ENCODE measurements at regions of chr17 and their contacts with region 1.

Region 1: GRCh38 chr17:75515496-75516254 is at the start of gene CASKIN2:
- DNase-seq: peak; percentile 98
- ATAC-seq: peak; percentile 71
- H3K4me3 ChIP-seq: peak within 1 kb of the TSS; percentile 78
- H3K27ac ChIP-seq: peak within 1 kb of the TSS; percentile 8
- H3K4me1 ChIP-seq: peaks cover 47% of the 10 kb centered on the region
- H3K27me3 ChIP-seq: no peaks in the 10 kb centered on the region
- CTCF ChIP-seq: peak; percentile 100
- total RNA-seq, gene CASKIN2: 22.0 and 28.3 TPM in 2 replicates

Region 2: DNA sequence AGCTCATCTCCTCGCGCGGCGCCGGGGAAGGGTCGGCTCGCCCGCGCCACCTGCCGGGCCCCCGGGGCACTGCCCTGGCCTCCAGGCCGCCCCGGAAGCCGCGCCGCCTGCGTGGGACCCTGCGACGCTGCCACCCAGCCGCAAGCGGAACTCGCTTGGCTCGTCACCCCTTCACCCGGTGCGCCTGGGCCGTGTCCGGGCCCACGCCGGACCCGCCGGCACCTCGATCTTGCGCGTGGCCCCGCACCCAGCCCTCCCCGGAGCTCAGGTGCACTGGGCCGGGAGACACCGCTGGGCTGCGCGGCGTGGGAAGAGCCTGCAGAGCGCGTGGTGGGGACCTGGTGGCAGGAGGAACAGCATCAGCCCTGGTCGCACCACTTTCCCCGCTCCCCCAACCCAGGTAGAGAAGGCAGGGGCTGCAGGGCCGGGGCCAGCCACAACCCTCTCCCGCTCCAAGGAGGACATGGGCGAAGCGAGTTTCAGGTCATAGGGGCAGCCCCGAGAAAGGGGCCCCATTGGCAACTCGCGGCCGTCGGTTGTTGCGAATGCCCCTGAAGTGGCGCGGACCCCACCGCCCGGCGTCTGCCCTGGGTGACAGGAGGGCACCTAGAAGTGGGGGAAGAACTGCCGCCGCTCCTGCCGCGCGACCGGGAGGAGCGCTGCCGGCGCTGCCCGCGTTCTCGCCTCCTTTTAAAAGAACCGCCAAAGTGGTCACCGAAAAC is 244.3 kb before region 1 on chr17:
- CTCF ChIA-PET with region 1: interaction called, 14 read pairs
- POLR2A ChIA-PET with region 1: no interaction called
- intact Hi-C with region 1: no loop called
- DNase-seq: peak; percentile 90
- ATAC-seq: peak; percentile 53
- H3K4me3 ChIP-seq: peak overlapping the region; percentile 73
- H3K27ac ChIP-seq: peak overlapping the region; percentile 36
- H3K4me1 ChIP-seq: peaks cover 20% of the 10 kb centered on the region
- H3K27me3 ChIP-seq: no peaks in the 10 kb centered on the region
- CTCF ChIP-seq: peak; percentile 57

Region 3: GRCh38 chr17:75404181-75404730 is 111.4 kb before region 1 on chr17:
- CTCF ChIA-PET with region 1: no interaction called
- POLR2A ChIA-PET with region 1: no interaction called
- intact Hi-C with region 1: no loop called
- DNase-seq: peak; percentile 90
- ATAC-seq: peak; percentile 45
- H3K4me3 ChIP-seq: peak overlapping the region; percentile 96
- H3K27ac ChIP-seq: peak overlapping the region; percentile 12
- H3K4me1 ChIP-seq: peaks cover 14% of the 10 kb centered on the region
- H3K27me3 ChIP-seq: no peaks in the 10 kb centered on the region
- CTCF ChIP-seq: peak; percentile 93

Region 4: GRCh38 chr17:75430159-75430974 is 85.3 kb before region 1 on chr17:
- CTCF ChIA-PET with region 1: interaction called, 8 read pairs
- POLR2A ChIA-PET with region 1: interaction called, 14 read pairs
- intact Hi-C with region 1: loop called (anchors 1 kb)
- DNase-seq: peak; percentile 19
- ATAC-seq: no peak
- H3K4me3 ChIP-seq: no peak overlapping the region
- H3K27ac ChIP-seq: no peak overlapping the region
- H3K4me1 ChIP-seq: peaks cover 21% of the 10 kb centered on the region
- H3K27me3 ChIP-seq: no peaks in the 10 kb centered on the region
- CTCF ChIP-seq: no peak

Region 5: GRCh38 chr17:75456417-75457046 is 59.1 kb before region 1 on chr17 and contains the start of gene TMEM94:
- CTCF ChIA-PET with region 1: interaction called, 3 read pairs
- POLR2A ChIA-PET with region 1: no interaction called
- intact Hi-C with region 1: loop called (anchors 5 kb)
- DNase-seq: peak; percentile 99
- ATAC-seq: peak; percentile 89
- H3K4me3 ChIP-seq: peak within 1 kb of the TSS; percentile 85
- H3K27ac ChIP-seq: peak within 1 kb of the TSS; percentile 13
- H3K4me1 ChIP-seq: peaks cover 38% of the 10 kb centered on the region
- H3K27me3 ChIP-seq: no peaks in the 10 kb centered on the region
- CTCF ChIP-seq: no peak
- total RNA-seq, gene TMEM94: 45.6 and 88.3 TPM in 2 replicates

Region 6: GRCh38 chr17:75549221-75550138 is 33.8 kb after region 1 on chr17:
- CTCF ChIA-PET with region 1: interaction called, 18 read pairs
- POLR2A ChIA-PET with region 1: no interaction called
- intact Hi-C with region 1: no loop called
- DNase-seq: peak; percentile 96
- ATAC-seq: peak; percentile 94
- H3K4me3 ChIP-seq: peak overlapping the region; percentile 57
- H3K27ac ChIP-seq: peak overlapping the region; percentile 98
- H3K4me1 ChIP-seq: peaks cover 30% of the 10 kb centered on the region
- H3K27me3 ChIP-seq: no peaks in the 10 kb centered on the region
- CTCF ChIP-seq: no peak

Region 7: DNA sequence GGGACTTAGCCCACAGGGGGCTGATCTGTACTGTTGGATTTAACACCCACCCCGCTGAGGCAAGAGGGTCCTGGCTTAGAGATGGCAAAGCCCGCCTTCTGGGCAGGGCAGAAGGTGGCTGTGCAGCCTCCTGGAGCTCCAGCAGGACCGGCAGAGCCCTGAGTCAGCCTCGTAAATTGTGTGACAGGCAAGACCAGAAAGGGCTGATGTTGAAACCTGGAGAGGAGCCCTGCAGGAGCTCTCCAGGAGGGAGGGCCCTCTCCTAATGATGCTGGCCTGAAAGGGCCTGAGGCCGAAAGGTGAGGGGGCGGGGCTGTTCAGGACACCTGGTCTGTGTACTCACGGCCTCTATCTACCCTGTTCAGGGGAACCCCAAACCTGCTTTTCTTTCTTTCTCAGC is 49.4 kb after region 1 on chr17:
- CTCF ChIA-PET with region 1: interaction called, 15 read pairs
- POLR2A ChIA-PET with region 1: interaction called, 4 read pairs
- intact Hi-C with region 1: loop called (anchors 2 kb)
- DNase-seq: peak; percentile 96
- ATAC-seq: peak; percentile 96
- H3K4me3 ChIP-seq: no peak overlapping the region
- H3K27ac ChIP-seq: no peak overlapping the region
- H3K4me1 ChIP-seq: peaks cover 31% of the 10 kb centered on the region
- H3K27me3 ChIP-seq: no peaks in the 10 kb centered on the region
- CTCF ChIP-seq: no peak

Region 8: GRCh38 chr17:75589012-75589918 is 73.6 kb after region 1 on chr17:
- CTCF ChIA-PET with region 1: no interaction called
- POLR2A ChIA-PET with region 1: no interaction called
- intact Hi-C with region 1: loop called (anchors 2 kb)
- DNase-seq: peak; percentile 94
- ATAC-seq: peak; percentile 94
- H3K4me3 ChIP-seq: peak overlapping the region; percentile 65
- H3K27ac ChIP-seq: no peak overlapping the region
- H3K4me1 ChIP-seq: peaks cover 10% of the 10 kb centered on the region
- H3K27me3 ChIP-seq: no peaks in the 10 kb centered on the region
- CTCF ChIP-seq: peak; percentile 69

Measured in PC-3 (cell line).